Endothelial cell of umbilical vein (primary cell): ENCODE measurements at regions of chr14 and their contacts with region 1.

Region 1: DNA sequence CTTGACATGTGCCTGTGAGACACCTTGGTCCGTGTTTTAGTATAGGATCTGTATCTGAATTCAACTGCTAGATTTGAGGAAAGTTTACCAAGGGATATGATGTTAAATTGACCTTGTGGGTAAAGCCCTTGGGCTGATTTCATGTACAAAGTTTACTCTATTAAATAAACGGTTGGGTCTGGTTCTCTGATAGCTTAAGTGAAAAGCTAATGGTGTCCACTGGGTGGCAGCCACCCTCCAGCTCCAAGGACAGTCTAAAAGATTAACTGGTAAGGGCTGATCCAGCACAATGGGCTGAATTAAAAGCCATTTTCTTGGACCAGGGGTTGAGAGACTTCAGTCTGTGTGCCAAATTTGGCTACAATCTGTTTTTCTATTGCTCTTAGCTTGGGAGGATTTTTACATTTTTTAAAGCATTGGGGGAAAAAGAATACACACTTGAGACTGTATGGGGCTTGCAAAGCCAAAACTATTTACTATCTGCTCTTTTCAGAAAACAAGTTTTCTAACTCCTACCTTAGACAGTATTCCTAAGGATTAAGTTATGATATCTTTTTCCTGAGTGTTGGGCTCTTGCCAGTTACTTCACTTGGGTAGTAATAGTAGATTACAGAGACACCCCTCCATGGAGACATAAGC is 116.5 kb downstream of the GPHN start:
- DNase-seq: peak; percentile 71
- H3K4me3 ChIP-seq: no peak overlapping the region
- H3K27ac ChIP-seq: no peak overlapping the region
- H3K4me1 ChIP-seq: no peaks in the 10 kb centered on the region
- H3K27me3 ChIP-seq: no peaks in the 10 kb centered on the region
- CTCF ChIP-seq: peak; percentile 60 to 63
- POLR2A ChIP-seq: no peak

Region 2: GRCh38 chr14:66359500-66359899 is 264.9 kb before region 1 on chr14:
- CTCF ChIA-PET with region 1: interaction called, 20 read pairs
- POLR2A ChIA-PET with region 1: no interaction called
- dilution Hi-C with region 1: no loop called
- intact Hi-C with region 1: loop called (anchors 1 kb)
- DNase-seq: peak; percentile 48
- H3K4me3 ChIP-seq: no peak overlapping the region
- H3K27ac ChIP-seq: no peak overlapping the region
- H3K4me1 ChIP-seq: no peaks in the 10 kb centered on the region
- H3K27me3 ChIP-seq: peaks cover 0 to 16% of the 10 kb centered on the region in 2 experiments
- CTCF ChIP-seq: peak; percentile 32 to 37
- POLR2A ChIP-seq: no peak

Region 3: DNA sequence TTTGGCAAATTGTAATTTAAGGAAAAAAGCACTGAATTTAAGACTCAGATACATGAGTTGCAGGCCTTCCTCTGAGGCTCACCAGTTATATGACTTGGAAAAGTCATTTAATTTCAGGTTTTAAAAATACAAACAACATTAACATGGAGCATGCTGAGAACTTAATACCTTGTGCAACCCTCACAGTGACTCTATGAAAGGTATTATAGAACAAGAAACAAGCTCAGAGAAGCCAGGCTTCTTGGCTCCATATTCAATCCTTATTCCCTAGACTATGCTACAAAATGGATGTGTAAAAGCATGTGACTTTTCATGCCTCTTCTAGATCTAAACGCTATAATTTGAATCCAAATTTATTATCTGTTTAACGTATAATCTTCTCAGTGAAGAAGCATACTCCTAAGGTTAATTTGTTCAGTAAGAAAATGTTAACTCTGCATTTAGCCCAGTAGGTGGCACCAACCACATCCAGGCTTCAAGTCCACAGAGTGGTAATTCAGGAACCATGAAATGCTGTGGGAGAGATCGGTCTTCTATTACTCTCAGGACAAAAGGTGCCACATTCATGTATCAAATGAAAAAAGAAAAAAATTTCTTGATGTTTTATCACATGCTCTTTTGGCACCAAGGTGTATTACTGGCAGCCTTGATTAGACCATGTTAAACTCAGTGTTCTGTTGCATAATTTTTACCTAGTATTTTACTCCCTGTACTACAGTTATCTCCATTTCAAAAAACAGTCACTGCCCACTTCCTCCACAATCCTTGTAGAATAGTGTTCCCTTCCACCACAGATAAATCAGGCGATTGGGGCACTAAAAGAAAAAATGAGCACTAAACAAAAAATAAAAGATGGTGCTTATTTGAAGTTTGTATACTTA is 129.0 kb before region 1 on chr14:
- CTCF ChIA-PET with region 1: interaction called, 10 read pairs
- POLR2A ChIA-PET with region 1: no interaction called
- dilution Hi-C with region 1: no loop called
- intact Hi-C with region 1: loop called (anchors 1 kb)
- DNase-seq: peak; percentile 71
- H3K4me3 ChIP-seq: no peak overlapping the region
- H3K27ac ChIP-seq: no peak overlapping the region
- H3K4me1 ChIP-seq: no peaks in the 10 kb centered on the region
- H3K27me3 ChIP-seq: no peaks in the 10 kb centered on the region
- CTCF ChIP-seq: peak; percentile 59 to 61
- POLR2A ChIP-seq: no peak

Region 4: GRCh38 chr14:66539034-66539433 is 85.4 kb before region 1 on chr14:
- CTCF ChIA-PET with region 1: no interaction called
- POLR2A ChIA-PET with region 1: no interaction called
- dilution Hi-C with region 1: no loop called
- intact Hi-C with region 1: no loop called
- DNase-seq: no peak
- H3K4me3 ChIP-seq: no peak overlapping the region
- H3K27ac ChIP-seq: no peak overlapping the region
- H3K4me1 ChIP-seq: no peaks in the 10 kb centered on the region
- H3K27me3 ChIP-seq: no peaks in the 10 kb centered on the region
- CTCF ChIP-seq: no peak
- POLR2A ChIP-seq: no peak

Region 5: GRCh38 chr14:66662374-66662773 is 38.0 kb after region 1 on chr14:
- CTCF ChIA-PET with region 1: interaction called, 127 read pairs
- POLR2A ChIA-PET with region 1: no interaction called
- dilution Hi-C with region 1: no loop called
- intact Hi-C with region 1: loop called (anchors 1 kb)
- DNase-seq: peak; percentile 41
- H3K4me3 ChIP-seq: no peak overlapping the region
- H3K27ac ChIP-seq: no peak overlapping the region
- H3K4me1 ChIP-seq: no peaks in the 10 kb centered on the region
- H3K27me3 ChIP-seq: no peaks in the 10 kb centered on the region
- CTCF ChIP-seq: peak; percentile 64 to 66
- POLR2A ChIP-seq: no peak

Region 6: GRCh38 chr14:66746316-66747006 is 122.0 kb after region 1 on chr14:
- CTCF ChIA-PET with region 1: interaction called, 39 read pairs
- POLR2A ChIA-PET with region 1: no interaction called
- dilution Hi-C with region 1: no loop called
- intact Hi-C with region 1: loop called (anchors 1 kb)
- DNase-seq: peak; percentile 70
- H3K4me3 ChIP-seq: no peak overlapping the region
- H3K27ac ChIP-seq: no peak overlapping the region
- H3K4me1 ChIP-seq: no peaks in the 10 kb centered on the region
- H3K27me3 ChIP-seq: no peaks in the 10 kb centered on the region
- CTCF ChIP-seq: peak; percentile 50 to 56
- POLR2A ChIP-seq: no peak

Region 7: DNA sequence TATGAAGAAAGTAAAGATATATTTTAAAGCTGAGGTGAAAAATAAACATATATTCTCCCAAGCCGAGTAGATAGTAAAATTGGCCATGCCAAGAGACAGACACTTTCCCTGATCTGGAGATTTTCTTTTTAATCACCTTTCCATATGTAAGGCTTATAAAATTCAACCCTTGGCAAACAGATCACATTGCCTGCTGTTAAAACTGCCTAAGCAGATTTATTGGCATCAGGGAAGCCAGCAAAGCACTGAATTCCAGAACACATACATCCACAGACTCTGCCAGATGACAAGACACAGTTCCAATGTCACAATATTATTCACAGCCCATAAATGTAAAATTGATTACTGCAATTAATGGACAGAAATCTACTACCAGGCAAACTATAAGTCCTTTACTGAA is 486.6 kb after region 1 on chr14:
- CTCF ChIA-PET with region 1: interaction called, 23 read pairs
- POLR2A ChIA-PET with region 1: no interaction called
- dilution Hi-C with region 1: no loop called
- intact Hi-C with region 1: no loop called
- DNase-seq: no peak
- H3K4me3 ChIP-seq: no peak overlapping the region
- H3K27ac ChIP-seq: no peak overlapping the region
- H3K4me1 ChIP-seq: no peaks in the 10 kb centered on the region
- H3K27me3 ChIP-seq: no peaks in the 10 kb centered on the region
- CTCF ChIP-seq: no peak
- POLR2A ChIP-seq: no peak

Region 8: GRCh38 chr14:67137744-67138371 is 513.4 kb after region 1 on chr14:
- CTCF ChIA-PET with region 1: interaction called, 5 read pairs
- POLR2A ChIA-PET with region 1: no interaction called
- dilution Hi-C with region 1: no loop called
- intact Hi-C with region 1: loop called (anchors 5 kb)
- DNase-seq: peak; percentile 9
- H3K4me3 ChIP-seq: no peak overlapping the region
- H3K27ac ChIP-seq: no peak overlapping the region
- H3K4me1 ChIP-seq: no peaks in the 10 kb centered on the region
- H3K27me3 ChIP-seq: no peaks in the 10 kb centered on the region
- CTCF ChIP-seq: peak; percentile 16 to 18
- POLR2A ChIP-seq: no peak